Heart right ventricle (tissue), 16 donors: ENCODE measurements at regions of chr22 and their contacts with region 1.

Region 1: DNA sequence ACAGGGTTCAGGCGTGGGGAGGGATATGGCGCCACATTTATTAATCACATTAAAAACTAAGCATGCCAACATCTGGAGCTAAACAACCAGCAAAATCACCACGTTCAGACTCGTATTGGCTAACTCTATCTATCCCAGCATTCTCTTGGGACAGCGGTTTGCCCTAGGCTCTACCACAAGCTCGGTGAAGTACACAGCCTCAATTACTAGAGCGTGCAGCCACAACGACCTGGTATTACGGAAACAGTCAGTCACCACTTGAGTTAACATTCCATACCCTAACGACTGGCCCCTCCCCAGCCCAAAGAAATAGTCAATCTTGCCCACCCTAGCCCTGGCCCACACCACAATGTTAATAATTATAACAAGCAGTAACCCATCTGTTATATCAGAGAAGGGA is 32.1 kb downstream of the APOL5 start:
- DNase-seq: no peak
- ATAC-seq: no peak
- H3K4me3 ChIP-seq: no peak overlapping the region
- H3K27ac ChIP-seq: no peak overlapping the region
- H3K4me1 ChIP-seq: peaks cover 0 to 60% (median 42%) of the 10 kb centered on the region in 9 donors
- H3K27me3 ChIP-seq: no peaks in the 10 kb centered on the region
- CTCF ChIP-seq: no peak

Region 2: DNA sequence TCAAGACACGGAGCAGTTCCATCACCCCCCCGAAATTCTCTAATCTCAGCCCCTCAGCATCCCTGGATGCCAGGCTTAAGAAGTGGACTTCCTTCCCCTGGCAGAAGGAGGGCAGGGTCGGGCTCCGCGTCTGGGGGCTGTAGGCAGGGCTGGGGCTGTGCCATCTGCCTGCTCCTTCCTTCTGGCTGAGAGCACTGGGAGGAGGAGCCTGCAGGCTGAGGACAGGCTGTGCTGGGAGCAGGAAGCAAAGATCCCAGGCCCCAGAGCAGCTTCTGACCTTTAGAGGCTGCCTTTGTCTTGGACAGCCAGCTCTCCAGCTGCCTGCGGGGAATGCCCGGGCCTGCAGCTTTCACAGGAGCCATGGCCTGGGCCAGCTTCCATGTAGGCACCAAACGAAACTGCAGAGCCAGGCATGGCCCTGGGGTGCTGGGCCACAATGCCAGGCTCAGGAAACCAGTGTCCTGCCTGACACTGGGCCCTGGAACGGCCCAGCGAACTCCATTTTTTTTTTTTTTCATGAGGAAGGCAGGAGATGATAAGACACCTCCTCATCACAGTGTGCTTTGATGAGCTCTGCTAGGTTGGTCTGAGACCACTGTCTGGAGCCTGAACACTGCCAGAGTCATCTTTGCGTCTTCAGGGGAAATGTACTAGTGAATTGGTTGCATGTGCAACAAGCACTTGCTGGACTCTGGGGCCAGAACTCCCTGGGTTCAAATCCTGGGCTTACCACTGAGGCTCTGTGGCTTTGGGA is 281.9 kb before region 1 on chr22:
- intact Hi-C with region 1: no loop called
- DNase-seq: peak; percentile 75 to 82
- ATAC-seq: peak; percentile 89 to 98 (median 96)
- H3K4me3 ChIP-seq: no peak overlapping the region
- H3K27ac ChIP-seq: peak overlapping the region; percentile 58 to 86 (median 75)
- H3K4me1 ChIP-seq: peaks cover 6 to 22% (median 17%) of the 10 kb centered on the region in 9 donors
- H3K27me3 ChIP-seq: no peaks in the 10 kb centered on the region
- CTCF ChIP-seq: no peak

Region 3: GRCh38 chr22:35638410-35638809 is 111.4 kb before region 1 on chr22:
- intact Hi-C with region 1: loop called in 2 of 10 experiments (anchors 5 to 10 kb)
- DNase-seq: peak; percentile 93
- ATAC-seq: peak; percentile 94 to 98 (median 97)
- H3K4me3 ChIP-seq: peak overlapping the region in 3 of 10 donors; percentile 6 to 18 (median 17)
- H3K27ac ChIP-seq: peak overlapping the region; percentile 74 to 91 (median 85)
- H3K4me1 ChIP-seq: peaks cover 13 to 63% (median 35%) of the 10 kb centered on the region in 9 donors
- H3K27me3 ChIP-seq: no peaks in the 10 kb centered on the region
- CTCF ChIP-seq: no peak

Region 4: GRCh38 chr22:35785181-35785923 is 35.5 kb after region 1 on chr22:
- intact Hi-C with region 1: no loop called
- DNase-seq: no peak
- ATAC-seq: peak in 4 of 8 donors; percentile 11 to 67 (median 52)
- H3K4me3 ChIP-seq: no peak overlapping the region
- H3K27ac ChIP-seq: peak overlapping the region in 3 of 10 donors; percentile 0 to 9 (median 6)
- H3K4me1 ChIP-seq: peaks cover 0 to 61% (median 42%) of the 10 kb centered on the region in 9 donors
- H3K27me3 ChIP-seq: no peaks in the 10 kb centered on the region
- CTCF ChIP-seq: no peak

Region 5: GRCh38 chr22:36086170-36086490 is 336.3 kb after region 1 on chr22:
- intact Hi-C with region 1: no loop called
- DNase-seq: no peak
- ATAC-seq: no peak
- H3K4me3 ChIP-seq: no peak overlapping the region
- H3K27ac ChIP-seq: no peak overlapping the region
- H3K4me1 ChIP-seq: peaks cover 0 to 2% (median 0%) of the 10 kb centered on the region in 9 donors
- H3K27me3 ChIP-seq: no peaks in the 10 kb centered on the region
- CTCF ChIP-seq: no peak

Region 6: DNA sequence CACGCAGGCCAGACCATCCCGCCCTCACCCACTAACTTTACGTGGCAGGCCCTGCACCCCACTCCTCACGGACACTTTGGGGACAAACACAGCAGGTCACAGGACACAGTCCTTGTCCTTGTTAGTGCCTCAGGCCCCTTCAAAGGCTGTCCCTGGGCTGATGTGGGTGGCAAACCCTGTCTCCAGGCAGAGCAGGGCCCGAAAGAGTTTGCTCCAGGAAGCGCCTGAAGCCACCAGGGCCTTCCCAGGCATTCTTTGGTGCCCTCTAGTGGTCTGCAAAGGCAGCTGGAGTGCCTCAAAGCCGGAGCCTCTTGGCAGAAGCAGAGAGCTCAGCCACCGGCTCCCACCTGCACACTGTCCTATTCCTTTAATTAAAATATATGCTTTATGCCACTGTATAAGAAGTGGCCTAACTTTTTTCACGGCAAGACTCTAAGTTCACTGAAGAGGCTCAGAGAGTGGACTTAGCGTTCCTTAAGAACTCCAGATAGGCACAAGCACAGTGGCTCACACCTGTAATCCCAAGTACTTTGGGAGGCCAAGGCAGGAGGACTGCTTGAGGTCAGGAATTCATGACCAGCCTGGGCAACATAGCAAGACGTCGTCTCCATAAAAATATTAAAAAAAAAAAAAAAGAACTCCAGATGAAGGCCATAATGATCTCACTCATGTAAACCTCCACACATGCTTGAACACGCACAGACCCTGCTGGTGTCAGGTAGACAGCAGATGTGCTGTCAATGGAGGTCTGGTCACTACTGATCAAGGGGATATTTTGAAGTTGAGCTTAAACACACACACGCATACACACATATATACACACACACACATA is 720.6 kb after region 1 on chr22:
- intact Hi-C with region 1: no loop called
- DNase-seq: peak; percentile 74 to 87
- ATAC-seq: peak; percentile 61 to 79 (median 74)
- H3K4me3 ChIP-seq: no peak overlapping the region
- H3K27ac ChIP-seq: peak overlapping the region in 9 of 10 donors; percentile 66 to 97 (median 94)
- H3K4me1 ChIP-seq: peaks cover 15 to 79% (median 54%) of the 10 kb centered on the region in 9 donors
- H3K27me3 ChIP-seq: no peaks in the 10 kb centered on the region
- CTCF ChIP-seq: peak in 8 of 9 donors; percentile 92 to 98 (median 97)